ENCODE measurements at regions of chr14 and their contacts with region 1.

Region 1: GRCh38 chr14:50860478-50861086 is 11.3 kb upstream of the ABHD12B start:
- DNase-seq: peak; percentile 80
- H3K4me3 Mint-ChIP-seq: peak overlapping the region; percentile 82
- H3K27ac Mint-ChIP-seq: peak overlapping the region; percentile 60
- H3K4me1 Mint-ChIP-seq: peaks cover 14% of the 10 kb centered on the region
- H3K27me3 Mint-ChIP-seq: peaks cover 19% of the 10 kb centered on the region

Region 2: DNA sequence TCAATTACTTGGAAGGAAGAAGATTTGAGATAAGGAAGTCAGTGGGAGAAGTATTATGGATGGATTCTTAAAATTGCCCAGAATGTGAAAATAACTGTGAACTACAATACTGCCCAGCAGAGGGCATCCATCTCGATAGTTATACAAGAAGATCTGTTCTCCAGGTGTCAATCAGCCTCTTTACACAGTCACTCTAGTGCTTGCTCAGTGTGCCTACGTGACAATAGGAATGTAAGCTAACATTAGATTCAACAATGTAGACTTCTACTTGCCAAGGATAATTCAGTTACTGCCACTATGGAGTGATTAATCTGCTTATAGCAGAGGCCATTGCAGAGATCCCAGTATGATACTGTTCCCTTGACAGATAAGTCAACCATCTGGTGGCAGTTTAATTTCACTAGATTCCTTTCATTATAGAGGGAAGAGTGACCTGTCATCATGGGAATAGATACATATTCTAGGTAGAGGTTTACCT is 317.6 kb before region 1 on chr14:
- intact Hi-C with region 1: loop called (anchors 1 kb)
- DNase-seq: no peak
- H3K4me3 Mint-ChIP-seq: no peak overlapping the region
- H3K27ac Mint-ChIP-seq: no peak overlapping the region
- H3K4me1 Mint-ChIP-seq: peaks cover 12% of the 10 kb centered on the region
- H3K27me3 Mint-ChIP-seq: peaks cover 11% of the 10 kb centered on the region

Region 3: DNA sequence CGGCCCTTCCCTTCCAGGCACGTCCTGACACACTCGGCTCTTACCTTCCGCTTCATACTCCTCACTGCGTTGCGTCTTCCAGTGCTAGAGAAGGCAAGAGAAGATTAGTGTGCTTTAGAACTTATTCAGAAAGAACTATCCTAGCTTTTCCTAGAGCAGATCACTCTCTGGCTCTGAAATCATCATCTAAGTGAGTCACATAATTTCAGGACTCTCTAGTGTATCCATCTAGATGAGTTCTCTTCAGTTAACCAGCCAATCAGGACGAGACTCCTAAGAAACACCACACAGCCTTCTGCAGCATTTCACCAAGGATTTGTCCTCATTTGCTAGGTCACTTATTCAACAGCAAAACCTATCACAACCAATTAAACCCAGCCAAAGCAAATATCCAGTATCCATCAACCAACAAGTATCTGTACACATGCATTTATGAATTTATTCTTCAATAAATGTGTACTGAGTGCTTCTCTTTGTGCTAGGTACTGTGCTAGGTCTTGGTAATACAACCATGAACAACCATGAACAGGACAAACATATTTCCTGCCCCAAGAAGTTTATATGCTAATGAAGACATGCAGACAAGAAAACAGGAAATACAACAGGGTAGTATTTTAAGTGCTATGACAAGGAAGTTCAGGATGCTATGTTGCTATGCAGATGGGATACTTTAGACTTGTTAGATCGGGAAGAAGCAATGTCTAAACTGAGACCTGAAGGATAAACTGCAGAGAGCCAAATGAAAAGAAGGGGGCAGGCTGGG is 81.7 kb before region 1 on chr14:
- intact Hi-C with region 1: loop called (anchors 1 kb)
- DNase-seq: no peak
- H3K4me3 Mint-ChIP-seq: no peak overlapping the region
- H3K27ac Mint-ChIP-seq: peak overlapping the region; percentile 6
- H3K4me1 Mint-ChIP-seq: peaks cover 18% of the 10 kb centered on the region
- H3K27me3 Mint-ChIP-seq: no peaks in the 10 kb centered on the region

Region 4: DNA sequence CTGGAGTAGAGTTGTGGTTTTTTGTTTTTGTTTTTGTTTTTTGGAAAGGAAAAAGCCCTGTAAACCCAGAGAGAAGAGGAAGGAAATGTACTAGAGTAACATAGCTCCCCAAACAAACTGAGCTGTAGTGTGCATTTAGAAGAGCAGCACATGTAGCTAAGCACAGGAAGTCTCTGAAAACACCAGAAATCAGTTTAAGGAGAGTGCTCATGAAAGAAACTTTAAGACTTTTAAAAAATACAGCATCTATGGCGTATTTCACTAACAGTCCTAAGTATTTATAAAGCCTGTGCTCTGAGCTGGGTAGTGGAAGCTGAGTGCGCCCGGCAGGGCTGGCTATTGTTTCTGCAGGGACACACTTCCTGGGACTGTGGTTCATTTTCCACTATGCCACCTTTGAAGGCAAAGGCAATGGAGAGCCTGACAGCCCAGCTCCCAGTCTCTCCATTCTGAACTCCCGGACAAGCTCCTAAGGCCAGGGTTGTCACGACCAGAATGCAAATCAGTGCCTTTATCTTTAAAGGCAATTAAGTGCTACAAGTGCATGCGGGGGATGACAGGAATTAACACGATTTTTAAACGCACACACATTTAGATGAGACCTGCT is 75.0 kb before region 1 on chr14:
- intact Hi-C with region 1: loop called (anchors 2 kb)
- DNase-seq: no peak
- H3K4me3 Mint-ChIP-seq: no peak overlapping the region
- H3K27ac Mint-ChIP-seq: peak overlapping the region; percentile 70
- H3K4me1 Mint-ChIP-seq: peaks cover 39% of the 10 kb centered on the region
- H3K27me3 Mint-ChIP-seq: no peaks in the 10 kb centered on the region

Region 5: DNA sequence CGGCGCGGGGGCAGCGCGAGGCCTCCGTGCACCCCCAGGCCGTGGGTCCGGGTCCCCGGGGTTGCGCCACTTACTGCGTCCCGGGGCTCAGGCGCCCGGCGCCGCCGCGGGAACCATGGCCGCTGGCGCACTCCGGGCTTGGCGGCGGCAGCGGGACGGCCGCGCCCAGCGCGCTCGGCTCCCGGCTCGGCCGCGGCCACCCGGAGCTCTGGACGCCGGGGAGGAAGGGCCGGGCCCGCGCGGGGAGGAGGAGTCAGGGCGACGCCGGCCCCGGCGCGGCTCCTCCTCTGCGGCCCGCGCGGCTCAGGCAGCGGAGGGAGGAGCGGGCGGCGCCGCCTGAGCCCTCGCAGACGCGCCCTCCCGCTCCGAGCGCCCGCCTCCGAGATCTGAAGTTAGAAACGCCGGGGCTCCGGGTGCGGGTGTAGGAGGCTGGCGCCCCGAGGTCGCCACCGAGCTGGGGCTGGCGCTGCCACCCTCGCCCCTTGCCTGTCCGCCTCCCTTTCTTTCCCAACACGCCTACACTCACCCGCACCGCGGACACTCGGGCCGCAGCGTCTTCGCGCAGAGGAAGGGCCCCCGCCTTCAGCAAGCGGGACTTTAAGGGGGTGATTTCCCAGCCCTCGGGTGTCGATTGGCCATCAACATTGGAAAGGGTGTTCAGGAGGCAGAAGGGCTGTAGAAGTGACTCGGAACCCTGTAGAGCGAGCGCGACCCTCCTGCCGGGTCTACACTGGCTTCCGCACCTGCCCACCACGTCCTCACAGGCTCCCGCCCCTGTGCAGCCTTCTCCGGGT is 29.5 kb before region 1 on chr14 and contains the start of gene NIN:
- intact Hi-C with region 1: loop called (anchors 1 kb)
- DNase-seq: peak; percentile 68
- H3K4me3 Mint-ChIP-seq: peak within 1 kb of the TSS; percentile 91
- H3K27ac Mint-ChIP-seq: peak within 1 kb of the TSS; percentile 87
- H3K4me1 Mint-ChIP-seq: peaks cover 47% of the 10 kb centered on the region
- H3K27me3 Mint-ChIP-seq: peaks cover 13% of the 10 kb centered on the region
- total RNA-seq, gene NIN: 43.0 and 45.1 TPM in 2 replicates

Region 6: DNA sequence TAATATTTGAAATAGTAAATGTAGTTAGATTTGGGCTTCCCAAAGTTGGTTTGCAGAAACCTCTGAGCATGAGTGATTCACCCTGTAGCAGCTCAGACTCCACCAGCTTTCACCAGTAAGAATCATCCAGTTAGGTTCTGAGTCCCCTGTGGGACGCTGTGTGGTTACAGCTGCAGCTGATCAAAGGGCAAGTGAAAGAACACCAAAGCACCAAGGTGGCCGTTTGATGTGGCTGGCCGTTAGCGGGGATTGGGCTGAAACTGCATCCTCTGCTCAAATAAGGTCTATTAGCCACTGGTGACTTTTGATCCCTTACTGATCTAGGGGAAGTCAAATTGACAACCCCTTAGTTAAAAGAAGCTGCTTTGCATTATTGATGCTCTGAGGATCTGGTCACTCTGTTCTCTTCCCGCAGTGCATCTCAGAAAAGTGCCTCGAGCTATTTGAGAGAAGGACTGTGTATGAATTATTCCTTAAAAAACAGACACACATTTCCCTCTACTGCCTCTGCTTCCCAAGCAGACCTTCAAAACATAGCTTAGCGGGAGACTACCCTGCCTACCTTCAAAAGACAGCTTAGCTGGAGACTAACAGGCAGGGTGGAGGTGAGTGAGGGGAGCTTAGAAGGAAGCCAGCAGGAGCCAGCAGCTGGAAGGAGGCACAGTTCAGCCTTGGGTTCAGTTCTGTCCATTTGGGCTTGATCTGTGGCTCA is 14.9 kb after region 1 on chr14:
- intact Hi-C with region 1: loop called (anchors 2 kb)
- DNase-seq: peak; percentile 65
- H3K4me3 Mint-ChIP-seq: no peak overlapping the region
- H3K27ac Mint-ChIP-seq: no peak overlapping the region
- H3K4me1 Mint-ChIP-seq: peaks cover 25% of the 10 kb centered on the region
- H3K27me3 Mint-ChIP-seq: peaks cover 73% of the 10 kb centered on the region

Measured in activated T-helper 2 cell treated with anti-CD3 and anti-CD28 coated beads, Interferon-gamma antibody, Interleukin-2, Interleukin-4, amounts not matched to agents 10 μg/mL and 5 μg/mL and 100 μg/mL, durations not matched to agents 14 hours and 24 hours and 36 hours (primary cell).